ENCODE measurements at regions of chr2 and their contacts with region 1.

Region 1: GRCh38 chr2:4455486-4456155 is 752.2 kb downstream of the DCDC2C start:
- DNase-seq: no peak
- ATAC-seq: no peak
- H3K4me3 ChIP-seq: no peak overlapping the region
- H3K27ac ChIP-seq: no peak overlapping the region
- H3K4me1 ChIP-seq: no peaks in the 10 kb centered on the region
- H3K27me3 ChIP-seq: no peaks in the 10 kb centered on the region
- CTCF ChIP-seq: no peak

Region 2: GRCh38 chr2:4486971-4487370 is 31.4 kb after region 1 on chr2:
- intact Hi-C with region 1: loop called in 1 of 10 experiments (anchors 2 kb)
- DNase-seq: no peak
- ATAC-seq: no peak
- H3K4me3 ChIP-seq: no peak overlapping the region
- H3K27ac ChIP-seq: no peak overlapping the region
- H3K4me1 ChIP-seq: no peaks in the 10 kb centered on the region
- H3K27me3 ChIP-seq: no peaks in the 10 kb centered on the region
- CTCF ChIP-seq: no peak

Region 3: DNA sequence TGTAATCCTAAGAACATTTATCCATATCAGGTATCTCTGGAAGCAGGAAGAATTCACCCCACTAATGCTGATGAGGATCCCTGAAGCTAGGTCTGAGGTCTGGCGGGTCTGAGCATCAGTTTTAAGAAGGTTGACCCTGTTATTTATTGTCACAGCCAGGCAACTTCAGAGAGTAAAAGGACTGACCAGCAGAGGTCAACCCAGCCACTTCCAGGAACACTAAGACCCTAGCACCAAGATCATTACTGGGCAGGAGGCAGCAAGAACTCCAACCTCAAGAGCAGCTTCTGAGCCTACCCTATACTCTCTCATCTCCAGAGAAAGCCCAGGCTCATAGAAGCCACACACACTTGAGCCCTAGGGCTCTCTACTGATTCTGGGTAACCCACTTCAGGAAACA is 149.1 kb after region 1 on chr2:
- intact Hi-C with region 1: no loop called
- DNase-seq: no peak
- ATAC-seq: no peak
- H3K4me3 ChIP-seq: no peak overlapping the region
- H3K27ac ChIP-seq: no peak overlapping the region
- H3K4me1 ChIP-seq: no peaks in the 10 kb centered on the region
- H3K27me3 ChIP-seq: no peaks in the 10 kb centered on the region
- CTCF ChIP-seq: no peak